ENCODE measurements at regions of chr6 and their contacts with region 1.

Region 1: DNA sequence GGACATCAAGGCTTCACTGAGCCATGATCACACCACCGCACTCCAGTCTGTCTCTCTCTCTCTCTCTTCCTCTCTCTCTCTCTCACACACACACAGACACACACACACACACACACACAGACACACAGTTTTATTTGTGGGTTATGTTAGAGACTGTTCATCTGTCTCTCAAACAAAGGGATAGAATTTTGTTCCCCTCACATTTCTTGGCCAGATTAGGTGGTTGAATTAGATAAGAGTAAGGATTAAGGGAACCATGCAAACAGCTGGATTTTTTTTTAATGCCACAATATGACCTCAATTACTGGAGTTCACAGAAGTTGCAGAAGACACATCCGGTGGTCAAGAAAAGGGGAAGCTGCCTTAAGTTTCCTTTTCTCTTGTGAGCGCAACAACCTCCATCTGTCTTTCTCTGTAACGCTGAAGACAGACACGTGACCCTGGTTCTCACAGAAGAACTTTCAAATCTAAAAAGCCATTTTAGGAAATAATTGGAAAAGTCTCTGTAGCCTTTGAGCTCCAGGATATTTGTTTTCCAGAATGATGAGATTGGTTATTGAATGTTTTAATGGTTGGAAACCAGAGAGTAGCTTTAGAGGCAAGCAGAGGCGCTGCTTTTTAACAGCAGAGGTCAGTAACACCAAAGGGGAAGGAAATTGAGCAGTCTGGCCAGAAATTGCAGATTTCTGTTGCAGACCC is 33.0 kb upstream of the LGSN start:
- DNase-seq: peak; percentile 53
- CTCF ChIP-seq: peak; percentile 54

Region 2: GRCh38 chr6:63121166-63121565 is 231.6 kb before region 1 on chr6:
- in situ Hi-C with region 1: no loop called
- DNase-seq: no peak
- CTCF ChIP-seq: no peak

Region 3: DNA sequence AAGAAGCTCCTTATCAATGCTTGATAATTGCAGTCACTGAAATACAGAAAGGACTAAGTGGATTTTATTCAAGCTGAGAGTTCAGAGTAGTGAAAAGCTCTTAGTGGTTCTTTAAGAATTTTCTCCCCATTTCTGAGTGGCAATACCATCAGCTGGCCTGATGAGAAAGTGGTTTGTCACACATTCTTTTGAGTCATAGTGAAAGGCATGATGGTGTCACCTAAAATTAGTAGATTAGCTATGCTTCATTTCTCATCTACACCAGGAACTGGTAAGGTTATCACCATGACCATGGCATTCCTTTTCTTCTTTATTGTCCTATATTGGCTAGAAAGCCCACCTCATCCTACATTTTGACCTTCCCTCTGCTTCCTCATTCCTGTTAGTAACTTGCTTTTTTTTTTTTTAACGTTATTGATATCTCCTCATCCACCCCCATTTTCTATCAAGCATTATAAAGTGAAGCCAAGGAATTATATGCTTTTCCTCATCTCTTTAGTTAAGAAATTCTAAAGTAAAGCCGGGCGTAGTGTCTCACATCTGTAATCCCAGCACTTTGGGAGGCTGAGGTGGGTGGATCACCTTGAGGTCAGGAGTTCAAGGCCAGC is 152.1 kb after region 1 on chr6:
- in situ Hi-C with region 1: no loop called
- DNase-seq: peak; percentile 68
- CTCF ChIP-seq: no peak

Region 4: DNA sequence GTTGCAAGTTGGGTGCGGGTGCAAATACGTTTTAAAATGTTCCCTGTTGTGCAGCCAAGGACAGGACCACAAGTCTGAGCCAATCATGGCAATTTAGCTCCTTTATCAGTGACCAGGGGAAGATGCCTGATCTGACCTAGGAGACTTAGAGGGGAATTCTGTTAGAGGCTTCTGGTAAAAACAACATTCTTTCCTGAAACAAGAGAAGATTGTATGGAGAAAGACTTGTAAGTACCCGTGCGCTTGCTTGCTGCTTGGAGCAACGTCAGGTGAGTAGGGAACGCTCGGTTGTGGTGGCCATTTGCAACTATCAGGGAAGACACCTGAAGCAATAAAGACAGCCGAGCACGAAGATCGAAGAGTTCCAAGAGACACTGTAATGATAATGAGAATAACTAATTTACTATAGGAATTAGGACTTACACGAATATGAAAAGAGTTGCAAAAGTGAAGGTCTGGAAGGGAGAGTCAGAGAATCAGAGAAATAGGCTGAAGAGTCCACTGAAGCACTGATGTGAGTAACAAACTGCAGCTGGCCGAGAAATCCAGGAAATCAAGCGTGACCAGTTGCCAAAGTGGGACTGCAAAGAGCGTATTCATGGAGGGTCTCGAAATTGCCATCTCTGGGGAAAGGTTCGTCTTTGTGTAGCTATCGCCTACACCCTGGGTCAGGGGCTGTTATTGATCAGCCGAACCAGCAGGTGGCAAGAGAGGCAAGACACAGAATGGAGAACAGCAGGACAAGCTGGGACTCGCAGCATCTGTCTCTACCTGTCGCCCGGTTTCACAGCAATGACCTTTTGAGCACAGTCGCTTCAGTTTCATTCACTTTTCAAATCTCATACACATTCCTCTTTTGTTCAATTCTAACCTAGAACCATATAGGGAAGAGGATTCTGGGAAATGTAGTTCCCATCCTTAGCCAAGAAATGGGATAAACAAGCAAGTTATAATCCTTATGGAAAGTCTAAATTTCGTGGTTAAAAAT is 245.6 kb after region 1 on chr6:
- in situ Hi-C with region 1: loop called (anchors 10 kb)
- DNase-seq: peak; percentile 76
- CTCF ChIP-seq: peak; percentile 85

Region 5: DNA sequence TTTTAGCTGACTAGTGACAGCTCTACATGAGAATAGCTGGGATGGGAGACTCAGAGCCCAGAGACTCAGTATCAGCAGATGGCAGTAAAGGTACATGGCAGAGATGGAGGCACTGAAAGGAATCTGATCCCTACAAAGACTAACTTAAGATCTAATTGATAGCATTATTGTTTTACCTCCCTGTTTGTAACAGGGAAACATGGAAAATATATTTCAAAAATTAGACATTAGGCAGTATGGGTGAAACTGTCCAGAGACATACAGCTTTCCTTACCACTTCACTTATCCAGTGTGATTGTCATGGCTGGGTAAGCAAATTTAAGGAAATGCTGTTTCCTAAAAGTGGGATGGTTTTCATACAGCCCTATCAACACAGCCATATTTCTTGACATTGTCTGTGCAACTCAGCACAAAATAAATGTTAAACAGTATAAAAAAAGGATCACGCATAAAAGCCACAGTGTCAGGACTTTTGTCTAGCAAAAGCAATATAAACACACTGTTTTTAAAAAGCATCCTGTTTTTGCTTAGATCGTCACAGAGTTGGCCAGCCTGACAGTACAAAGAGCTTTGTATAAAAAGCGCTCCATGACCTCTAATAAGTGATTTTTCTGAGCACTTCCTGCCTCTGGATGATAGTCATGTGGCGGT is 659.7 kb after region 1 on chr6:
- in situ Hi-C with region 1: no loop called
- DNase-seq: peak; percentile 36
- CTCF ChIP-seq: peak; percentile 49